H1 (cell line): ENCODE measurements at regions of chr2 and their contacts with region 1.

Region 1: GRCh38 chr2:9813312-9814133 is 29.8 kb upstream of the TAF1B start:
- DNase-seq: peak; percentile 66 to 95
- H3K4me3 ChIP-seq: no peak overlapping the region
- H3K27ac ChIP-seq: no peak overlapping the region
- H3K4me1 ChIP-seq: no peaks in the 10 kb centered on the region; a peak in 1 of 7 replicates
- H3K27me3 ChIP-seq: no peaks in the 10 kb centered on the region; a peak in 1 of 7 replicates
- CTCF ChIP-seq: peak; percentile 88 to 98 (median 96)
- EP300 ChIP-seq: no peak
- POLR2A ChIP-seq: no peak
- RAD21 ChIP-seq: peak; percentile 86 to 94

Region 2: DNA sequence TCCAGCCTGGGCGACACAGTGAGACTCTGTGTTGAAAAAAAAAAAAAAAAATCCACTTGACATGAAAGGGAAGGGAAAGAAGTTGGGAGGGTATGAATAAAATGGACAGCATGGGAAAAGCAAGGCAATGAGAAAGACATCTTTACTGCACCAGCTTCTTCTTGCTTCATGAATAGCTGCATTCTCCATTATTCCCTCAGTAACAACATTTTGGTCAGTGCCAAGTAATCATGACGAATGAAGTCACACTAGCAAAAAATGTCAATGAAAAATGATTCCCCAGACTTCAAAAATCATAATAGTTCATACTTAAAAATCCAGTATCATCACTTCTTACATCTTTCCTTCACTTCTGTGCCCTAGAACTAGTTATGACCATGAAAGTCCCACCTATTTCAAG is 288.3 kb before region 1 on chr2:
- CTCF ChIA-PET with region 1: no interaction called
- POLR2A ChIA-PET with region 1: no interaction called
- DNase-seq: no peak
- H3K4me3 ChIP-seq: no peak overlapping the region
- H3K27ac ChIP-seq: no peak overlapping the region
- H3K4me1 ChIP-seq: no peaks in the 10 kb centered on the region
- H3K27me3 ChIP-seq: no peaks in the 10 kb centered on the region
- CTCF ChIP-seq: no peak
- EP300 ChIP-seq: no peak
- POLR2A ChIP-seq: no peak
- RAD21 ChIP-seq: no peak

Region 3: GRCh38 chr2:9824956-9825720 is 11.6 kb after region 1 on chr2:
- CTCF ChIA-PET with region 1: interaction called, 23 read pairs
- POLR2A ChIA-PET with region 1: interaction called, 3 read pairs
- DNase-seq: no peak
- H3K4me3 ChIP-seq: no peak overlapping the region
- H3K27ac ChIP-seq: no peak overlapping the region
- H3K4me1 ChIP-seq: peaks cover 0 to 4% (median 0%) of the 10 kb centered on the region in 4 experiments; a peak in 4 of 7 replicates
- H3K27me3 ChIP-seq: no peaks in the 10 kb centered on the region
- CTCF ChIP-seq: no peak
- EP300 ChIP-seq: no peak
- POLR2A ChIP-seq: no peak
- RAD21 ChIP-seq: no peak

Region 4: DNA sequence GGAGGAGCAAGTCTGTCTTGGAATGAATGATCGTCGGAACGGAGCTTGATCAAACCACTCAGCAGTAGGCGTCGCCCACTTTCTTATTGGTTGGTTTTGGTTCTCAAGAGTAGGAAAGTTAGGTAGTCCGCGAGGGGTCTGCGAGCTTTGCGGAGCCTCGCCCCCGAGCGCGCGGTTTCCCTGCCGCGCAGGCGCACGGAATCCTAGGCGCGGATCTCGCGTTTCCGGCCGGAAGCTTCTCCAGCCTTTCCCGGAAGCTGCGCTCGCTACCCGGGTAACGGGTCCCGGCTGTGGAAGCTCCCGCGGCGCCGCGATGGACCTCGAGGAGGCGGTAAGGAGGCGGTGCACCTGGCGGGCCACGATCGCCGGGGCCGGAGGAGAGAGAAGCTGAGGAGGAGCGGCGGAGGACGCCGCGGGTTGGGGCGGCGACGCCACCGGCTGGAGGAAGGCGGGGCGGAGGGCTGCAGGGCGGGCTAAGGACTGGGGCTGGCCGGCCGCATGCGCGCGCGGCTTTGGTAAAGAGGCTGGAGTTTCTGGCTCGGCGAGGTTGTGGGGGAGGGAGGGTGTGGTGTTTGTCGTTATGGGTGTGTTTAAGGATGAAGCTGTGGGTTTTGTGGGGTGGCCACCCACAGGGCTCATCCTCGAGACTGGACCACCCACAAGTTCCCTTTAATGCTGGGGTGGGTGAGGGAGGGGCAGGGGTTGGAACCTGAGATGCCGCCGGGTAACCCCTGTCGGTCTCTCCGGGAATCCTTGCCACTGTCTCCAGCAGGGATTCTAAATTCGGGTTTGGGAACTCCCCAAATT is 29.9 kb after region 1 on chr2 and contains the start of gene TAF1B:
- CTCF ChIA-PET with region 1: interaction called, 17 read pairs
- POLR2A ChIA-PET with region 1: interaction called, 13 read pairs
- DNase-seq: peak; percentile 92 to 93
- H3K4me3 ChIP-seq: peak within 1 kb of the TSS; percentile 70 to 80 (median 74)
- H3K27ac ChIP-seq: peak within 1 kb of the TSS; percentile 46
- H3K4me1 ChIP-seq: peaks cover 0 to 4% (median 0%) of the 10 kb centered on the region in 4 experiments; a peak in 3 of 7 replicates
- H3K27me3 ChIP-seq: no peaks in the 10 kb centered on the region
- CTCF ChIP-seq: peak; percentile 41 to 47 (median 44); a peak in 3 of 4 replicates
- EP300 ChIP-seq: no peak
- POLR2A ChIP-seq: peak in 1 of 2 experiments; percentile 39; a peak in 1 of 3 replicates
- RAD21 ChIP-seq: peak; percentile 32 to 48; a peak in 3 of 4 replicates
- total RNA-seq, gene TAF1B: 25.2 and 25.8 TPM in 2 replicates

Region 5: GRCh38 chr2:9941196-9941995 is 127.9 kb after region 1 on chr2:
- CTCF ChIA-PET with region 1: interaction called, 18 read pairs
- POLR2A ChIA-PET with region 1: no interaction called
- DNase-seq: peak in 1 of 2 experiments; percentile 50
- H3K4me3 ChIP-seq: no peak overlapping the region
- H3K27ac ChIP-seq: no peak overlapping the region
- H3K4me1 ChIP-seq: peaks cover 0 to 4% (median 0%) of the 10 kb centered on the region in 4 experiments; a peak in 2 of 7 replicates
- H3K27me3 ChIP-seq: no peaks in the 10 kb centered on the region; a peak in 1 of 7 replicates
- CTCF ChIP-seq: no peak
- EP300 ChIP-seq: no peak
- POLR2A ChIP-seq: no peak
- RAD21 ChIP-seq: no peak

Region 6: DNA sequence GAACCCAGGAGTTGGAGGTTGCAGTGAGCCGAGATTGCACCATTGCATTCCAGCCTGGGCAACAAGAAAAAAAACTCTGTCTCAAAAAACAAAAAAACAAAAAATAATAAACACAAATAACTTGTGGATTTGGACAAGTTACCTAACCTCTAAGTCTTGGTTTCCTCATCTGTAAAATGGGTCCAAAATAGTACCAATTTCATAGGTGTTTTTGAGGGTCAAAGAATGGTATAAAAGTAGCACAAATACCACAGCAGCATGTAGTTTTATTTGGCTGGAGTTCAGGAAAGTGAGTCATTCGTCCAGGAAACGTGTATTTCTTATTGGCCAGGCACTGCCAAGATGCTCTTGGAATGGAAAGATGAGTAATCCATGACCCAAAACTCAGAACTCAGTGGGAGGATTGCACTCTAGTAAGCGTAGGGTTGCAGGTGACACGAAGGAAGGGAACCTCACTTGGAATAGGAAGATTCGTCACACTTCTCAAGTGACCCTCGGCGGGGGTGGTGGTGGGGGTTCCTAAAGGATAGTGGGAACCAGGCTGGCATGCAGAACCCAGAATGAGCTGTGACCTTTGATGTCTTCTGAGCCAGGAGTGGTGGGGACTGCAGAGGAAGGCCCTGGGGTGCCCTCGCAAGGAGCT is 162.4 kb after region 1 on chr2:
- CTCF ChIA-PET with region 1: interaction called, 10 read pairs
- POLR2A ChIA-PET with region 1: no interaction called
- DNase-seq: no peak
- H3K4me3 ChIP-seq: no peak overlapping the region
- H3K27ac ChIP-seq: no peak overlapping the region
- H3K4me1 ChIP-seq: no peaks in the 10 kb centered on the region
- H3K27me3 ChIP-seq: no peaks in the 10 kb centered on the region
- CTCF ChIP-seq: no peak
- EP300 ChIP-seq: no peak
- POLR2A ChIP-seq: no peak
- RAD21 ChIP-seq: no peak

Region 7: DNA sequence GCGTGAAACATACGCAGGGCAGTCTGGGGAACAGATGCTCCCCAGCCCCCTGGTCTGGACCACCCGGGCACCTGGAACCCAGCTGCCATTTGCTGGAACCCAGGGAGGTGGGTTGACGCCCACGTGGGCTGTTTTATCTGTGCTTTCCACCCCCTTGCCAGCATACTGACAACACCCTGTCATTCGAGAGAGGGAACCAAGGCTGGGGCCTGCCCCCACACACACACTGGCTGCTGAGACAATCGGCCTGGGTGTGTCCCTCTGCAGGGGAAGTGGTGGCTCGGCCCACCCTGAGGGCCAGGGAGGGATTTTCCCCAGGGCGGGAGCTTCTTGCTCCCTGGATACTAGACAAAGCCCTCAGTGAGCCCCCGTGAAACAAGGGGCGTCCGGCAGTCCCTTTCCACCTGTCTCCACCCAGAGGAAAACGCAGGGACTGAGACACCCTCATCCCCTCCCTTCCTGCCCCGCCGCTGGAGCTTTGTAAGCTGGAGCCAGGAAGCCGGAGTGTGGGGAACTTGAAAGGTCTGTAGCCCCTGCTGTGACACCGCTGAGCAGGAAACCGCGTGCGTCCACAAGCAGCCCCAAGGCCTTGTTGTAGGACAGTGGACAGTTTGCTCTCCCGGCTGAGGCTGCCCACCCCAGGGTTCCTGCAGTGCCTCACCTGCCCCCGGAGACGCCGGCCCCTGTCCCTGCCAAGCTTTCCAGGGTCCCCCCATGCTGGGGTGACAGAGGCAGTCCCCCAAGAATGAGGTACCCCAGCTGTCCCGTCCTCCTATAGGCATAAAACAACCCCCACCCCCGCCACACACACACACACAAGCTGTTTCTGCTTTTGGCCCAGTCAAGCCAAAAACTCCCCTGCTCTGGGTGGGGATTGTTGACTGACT is 215.7 kb after region 1 on chr2:
- CTCF ChIA-PET with region 1: interaction called, 42 read pairs
- POLR2A ChIA-PET with region 1: no interaction called
- DNase-seq: no peak
- H3K4me3 ChIP-seq: no peak overlapping the region
- H3K27ac ChIP-seq: no peak overlapping the region
- H3K4me1 ChIP-seq: peaks cover 0 to 17% (median 7%) of the 10 kb centered on the region in 4 experiments; a peak in 6 of 7 replicates
- H3K27me3 ChIP-seq: no peaks in the 10 kb centered on the region
- CTCF ChIP-seq: no peak; a peak in 1 of 4 replicates
- EP300 ChIP-seq: no peak
- POLR2A ChIP-seq: no peak
- RAD21 ChIP-seq: 0 out of 4 replicates have a peak, but pooled peaks of 1 of the 2 experiments have one; percentile 2